ENCODE measurements at regions of chr14 and their contacts with region 1.

Region 1: GRCh38 chr14:50954811-50955372 is 10.6 kb upstream of the PYGL start:
- DNase-seq: peak; percentile 66
- H3K4me3 ChIP-seq: peak overlapping the region in 2 of 3 experiments; percentile 20 to 33
- H3K27ac ChIP-seq: peak overlapping the region; percentile 88
- H3K4me1 ChIP-seq: peaks cover 14% of the 10 kb centered on the region
- H3K27me3 ChIP-seq: no peaks in the 10 kb centered on the region
- CTCF ChIP-seq: peak; percentile 53 to 74

Region 2: DNA sequence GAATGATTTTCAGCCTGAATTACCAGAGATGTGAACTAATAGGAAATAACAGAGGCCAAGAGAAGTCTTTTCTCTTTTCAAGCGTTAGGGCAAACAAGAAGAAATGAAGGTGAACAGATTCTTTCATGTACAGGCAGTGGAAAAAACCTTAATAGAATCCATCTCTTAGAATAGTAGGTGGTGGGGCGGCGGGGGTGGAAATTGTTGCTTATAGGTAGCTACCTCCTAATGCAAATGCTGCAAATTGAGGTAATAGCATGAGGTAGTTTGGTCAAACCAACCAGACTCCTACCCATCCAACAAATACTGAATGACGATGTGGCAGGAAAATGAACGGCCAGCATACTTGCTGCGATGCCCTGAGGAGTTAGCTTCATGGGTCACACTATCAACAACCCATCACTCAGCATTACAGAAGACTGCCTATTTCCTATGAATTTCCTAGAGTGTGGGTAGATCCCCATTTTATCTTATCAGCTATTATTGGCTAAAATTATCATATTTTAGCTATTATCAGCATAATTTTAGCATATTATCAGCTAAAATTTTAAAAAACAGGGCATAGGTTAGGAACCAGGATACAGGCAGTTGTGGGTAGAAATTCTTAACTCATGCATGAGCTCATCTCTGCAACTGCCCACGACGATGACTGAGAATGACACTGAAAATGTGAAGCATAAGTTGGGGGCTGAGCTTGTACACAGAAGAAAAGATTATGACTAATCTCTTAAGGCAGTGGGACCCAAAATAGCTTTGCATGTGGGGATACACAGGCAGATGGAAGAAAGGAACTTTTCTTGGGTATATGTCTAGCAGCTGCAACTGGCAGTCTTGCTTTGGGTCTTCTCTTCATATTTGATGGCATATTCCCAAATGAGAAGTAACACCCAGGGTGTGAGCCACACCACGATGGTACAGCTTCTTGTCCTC is 192.6 kb before region 1 on chr14:
- CTCF ChIA-PET with region 1: no interaction called
- dilution Hi-C with region 1: no loop called
- in situ Hi-C with region 1: no loop called
- intact Hi-C with region 1: no loop called
- DNase-seq: no peak
- H3K4me3 ChIP-seq: no peak overlapping the region
- H3K27ac ChIP-seq: no peak overlapping the region
- H3K4me1 ChIP-seq: no peaks in the 10 kb centered on the region
- H3K27me3 ChIP-seq: no peaks in the 10 kb centered on the region
- CTCF ChIP-seq: no peak

Region 3: GRCh38 chr14:50906326-50907065 is 48.4 kb before region 1 on chr14:
- CTCF ChIA-PET with region 1: no interaction called
- dilution Hi-C with region 1: no loop called
- in situ Hi-C with region 1: no loop called
- intact Hi-C with region 1: no loop called
- DNase-seq: no peak
- H3K4me3 ChIP-seq: no peak overlapping the region
- H3K27ac ChIP-seq: no peak overlapping the region
- H3K4me1 ChIP-seq: no peaks in the 10 kb centered on the region
- H3K27me3 ChIP-seq: no peaks in the 10 kb centered on the region
- CTCF ChIP-seq: no peak

Region 4: GRCh38 chr14:50943943-50944646 is 10.8 kb before region 1 on chr14 and contains the start of gene PYGL:
- CTCF ChIA-PET with region 1: no interaction called
- dilution Hi-C with region 1: no loop called
- in situ Hi-C with region 1: no loop called
- intact Hi-C with region 1: loop called (anchors 1 kb)
- DNase-seq: peak; percentile 75
- H3K4me3 ChIP-seq: peak within 1 kb of the TSS; percentile 84 to 98 (median 87)
- H3K27ac ChIP-seq: peak within 1 kb of the TSS; percentile 82
- H3K4me1 ChIP-seq: peaks cover 23% of the 10 kb centered on the region
- H3K27me3 ChIP-seq: no peaks in the 10 kb centered on the region
- CTCF ChIP-seq: no peak
- total RNA-seq, gene PYGL: 102 to 146 TPM

Region 5: DNA sequence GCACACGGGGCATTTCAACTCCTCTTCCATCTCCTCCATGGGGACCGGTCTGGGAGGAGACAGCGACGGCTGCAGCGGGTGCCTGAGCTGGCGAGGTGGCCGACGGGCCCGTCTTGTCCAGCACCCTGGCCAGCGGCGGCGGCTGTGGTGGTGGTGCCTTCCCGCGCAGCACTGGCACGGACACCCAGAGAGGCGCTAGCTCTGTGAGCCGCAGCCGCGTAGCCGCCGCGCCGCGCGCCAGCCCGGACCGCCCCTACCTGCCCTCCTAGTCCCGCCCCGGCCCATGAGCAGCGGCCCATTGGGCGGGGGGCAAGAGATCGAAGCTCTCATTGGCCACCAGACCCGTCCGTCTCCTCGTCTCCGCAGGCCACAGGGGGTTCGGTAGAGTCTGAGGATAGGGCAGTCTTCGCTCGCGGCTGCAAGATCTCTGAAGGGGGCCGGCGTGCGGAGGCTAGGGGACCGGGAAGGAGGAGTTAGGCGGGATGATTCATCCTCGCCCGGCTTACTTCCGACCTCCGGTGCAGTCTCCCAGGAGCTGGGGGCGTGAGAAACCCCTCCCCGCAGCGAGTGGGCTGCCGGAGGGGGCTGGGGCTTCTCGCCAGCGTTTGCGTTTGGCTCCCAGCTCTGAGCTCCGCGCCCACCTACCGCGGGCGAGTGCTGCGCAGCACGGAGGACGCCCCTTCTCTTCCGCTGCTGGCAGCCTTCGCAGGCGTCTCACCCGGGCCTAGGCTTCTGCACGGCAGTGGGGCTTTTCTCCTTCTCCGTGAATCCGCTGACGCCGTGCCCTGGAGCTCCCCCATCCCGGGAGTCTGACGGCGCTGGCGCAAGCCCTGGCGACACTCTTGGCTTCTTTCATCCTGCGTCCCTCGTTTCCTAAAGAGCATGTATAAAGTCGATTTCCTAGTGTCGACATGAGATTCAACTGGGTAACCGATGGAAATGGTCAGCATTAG is 140.3 kb after region 1 on chr14 and contains the start of gene TRIM9:
- CTCF ChIA-PET with region 1: interaction called, 4 read pairs
- dilution Hi-C with region 1: no loop called
- in situ Hi-C with region 1: no loop called
- intact Hi-C with region 1: loop called (anchors 2 kb)
- DNase-seq: peak; percentile 97
- H3K4me3 ChIP-seq: peak within 1 kb of the TSS; percentile 46 to 69 (median 58)
- H3K27ac ChIP-seq: no peak within 1 kb of the TSS
- H3K4me1 ChIP-seq: peaks cover 21% of the 10 kb centered on the region
- H3K27me3 ChIP-seq: peaks cover 13% of the 10 kb centered on the region
- CTCF ChIP-seq: no peak
- total RNA-seq, gene TRIM9: 0.14 to 0.67 TPM

Region 6: DNA sequence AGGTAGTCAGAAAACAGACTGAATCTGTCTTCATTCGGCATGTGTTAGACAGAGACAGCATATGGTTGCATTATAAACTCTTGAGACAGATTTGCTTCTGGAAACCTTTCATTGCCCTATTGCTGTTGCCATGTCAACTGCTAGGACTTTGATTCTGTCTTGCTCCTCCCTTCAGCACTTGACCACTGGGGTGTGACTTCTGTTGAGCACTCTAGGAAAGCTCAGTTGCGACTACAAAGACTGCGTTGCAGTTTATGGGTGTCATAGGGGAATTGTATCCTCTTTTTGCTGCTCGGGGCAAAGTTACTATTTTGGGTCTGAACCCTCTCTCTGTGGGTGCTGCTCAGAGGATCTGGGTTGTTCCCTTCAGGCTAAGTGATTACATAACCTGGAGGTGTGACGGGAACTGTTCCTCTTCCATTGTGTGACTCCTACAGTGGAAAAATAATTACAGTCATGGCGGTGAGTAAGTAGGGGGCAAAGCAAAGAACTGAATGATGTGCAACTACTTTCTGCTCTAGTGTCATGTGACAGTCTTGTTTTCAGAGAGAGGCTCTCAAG is 184.3 kb after region 1 on chr14:
- CTCF ChIA-PET with region 1: no interaction called
- dilution Hi-C with region 1: no loop called
- in situ Hi-C with region 1: no loop called
- intact Hi-C with region 1: no loop called
- DNase-seq: peak; percentile 25
- H3K4me3 ChIP-seq: no peak overlapping the region
- H3K27ac ChIP-seq: no peak overlapping the region
- H3K4me1 ChIP-seq: no peaks in the 10 kb centered on the region
- H3K27me3 ChIP-seq: no peaks in the 10 kb centered on the region
- CTCF ChIP-seq: no peak

Region 7: GRCh38 chr14:51219473-51220448 is 264.9 kb after region 1 on chr14:
- CTCF ChIA-PET with region 1: no interaction called
- dilution Hi-C with region 1: no loop called
- in situ Hi-C with region 1: no loop called
- intact Hi-C with region 1: loop called (anchors 1 kb)
- DNase-seq: no peak
- H3K4me3 ChIP-seq: no peak overlapping the region
- H3K27ac ChIP-seq: no peak overlapping the region
- H3K4me1 ChIP-seq: no peaks in the 10 kb centered on the region
- H3K27me3 ChIP-seq: no peaks in the 10 kb centered on the region
- CTCF ChIP-seq: peak; percentile 53 to 65

Region 8: DNA sequence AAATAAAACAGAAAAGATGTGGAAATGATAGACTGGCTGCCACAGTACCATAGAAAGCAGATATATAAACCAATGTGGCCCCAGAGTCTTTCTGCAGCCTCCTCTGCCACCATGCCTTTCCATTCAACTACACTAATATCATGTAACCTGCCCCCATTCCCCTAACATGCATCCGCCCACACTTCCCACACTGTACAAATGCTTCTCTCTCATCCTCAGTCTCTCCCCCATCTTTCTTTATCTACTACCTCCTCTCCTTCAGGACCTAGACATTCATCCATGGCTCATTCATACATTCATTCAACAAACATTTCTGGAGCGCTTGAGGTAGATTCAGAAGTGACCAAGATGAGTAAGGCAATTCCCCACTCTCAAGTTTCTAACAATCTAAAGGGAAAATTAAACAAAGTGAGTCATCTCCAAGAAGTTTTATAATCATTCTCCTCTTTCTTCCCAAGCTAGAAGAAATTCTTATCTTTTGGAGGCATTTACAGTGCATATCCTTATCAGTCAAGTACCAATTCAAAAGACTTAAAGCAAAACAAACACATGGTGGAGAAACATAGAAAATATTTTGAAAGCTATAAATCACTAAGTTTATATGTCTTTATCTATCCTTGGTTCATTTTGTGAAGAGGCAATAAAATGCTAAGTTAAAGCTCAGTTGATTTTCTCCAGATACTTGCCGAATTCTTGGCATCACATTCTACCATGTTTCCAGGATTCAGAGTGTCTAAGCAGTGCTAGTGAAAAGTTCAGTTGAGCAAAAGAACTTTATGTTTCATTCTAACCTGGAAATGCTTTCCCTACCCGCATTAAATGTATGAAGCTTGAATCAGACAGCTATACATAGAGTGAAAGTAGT is 626.4 kb after region 1 on chr14:
- CTCF ChIA-PET with region 1: no interaction called
- dilution Hi-C with region 1: no loop called
- in situ Hi-C with region 1: no loop called
- intact Hi-C with region 1: no loop called
- DNase-seq: peak; percentile 61
- H3K4me3 ChIP-seq: no peak overlapping the region
- H3K27ac ChIP-seq: no peak overlapping the region
- H3K4me1 ChIP-seq: peaks cover 24% of the 10 kb centered on the region
- H3K27me3 ChIP-seq: no peaks in the 10 kb centered on the region
- CTCF ChIP-seq: no peak